ENCODE measurements at regions of chr5 and their contacts with region 1.

Region 1: DNA sequence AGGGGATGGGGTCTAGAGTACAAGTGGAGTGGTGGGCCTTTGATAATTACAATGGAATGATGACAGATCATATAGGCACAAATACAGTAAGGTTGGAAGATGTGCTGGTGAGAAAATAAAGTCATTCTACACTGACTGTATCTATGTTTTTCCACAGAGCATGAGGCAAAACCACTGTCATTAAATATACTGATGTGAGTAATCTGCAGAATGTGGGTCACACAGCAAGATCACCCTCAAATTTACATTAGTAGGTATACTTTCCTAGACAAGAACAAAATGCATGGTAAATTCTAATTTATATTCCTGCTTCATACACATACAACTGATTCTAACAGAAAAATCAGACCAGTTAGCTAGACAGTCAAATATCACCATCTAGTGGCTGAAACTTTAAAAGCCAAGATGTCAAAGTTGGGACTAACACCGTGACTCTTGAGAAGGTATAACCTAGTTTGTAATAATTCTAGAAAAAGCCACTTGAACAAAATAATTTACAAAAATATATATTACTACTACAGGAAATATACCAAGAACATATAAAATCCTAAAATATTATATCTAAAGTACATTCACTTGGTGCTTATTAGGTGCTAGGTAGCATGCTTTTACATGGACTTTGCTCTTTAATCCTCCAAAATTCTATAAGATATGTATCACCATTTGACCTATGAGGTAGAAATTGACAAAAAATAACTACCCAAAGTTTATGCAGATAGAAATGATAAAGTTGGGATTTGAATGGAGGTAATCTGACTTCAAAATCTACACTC is 19.5 kb downstream of the TTC33 start:
- DNase-seq: no peak
- ATAC-seq: peak; percentile 57 to 75

Region 2: GRCh38 chr5:39578887-39579497 is 1157.3 kb before region 1 on chr5:
- intact Hi-C with region 1: loop called in 1 of 2 experiments (anchors 5 kb)
- DNase-seq: no peak
- ATAC-seq: no peak

Region 3: GRCh38 chr5:39948867-39949468 is 787.3 kb before region 1 on chr5:
- intact Hi-C with region 1: loop called in 1 of 2 experiments (anchors 5 kb)
- DNase-seq: peak; percentile 28
- ATAC-seq: peak; percentile 65 to 77

Region 4: DNA sequence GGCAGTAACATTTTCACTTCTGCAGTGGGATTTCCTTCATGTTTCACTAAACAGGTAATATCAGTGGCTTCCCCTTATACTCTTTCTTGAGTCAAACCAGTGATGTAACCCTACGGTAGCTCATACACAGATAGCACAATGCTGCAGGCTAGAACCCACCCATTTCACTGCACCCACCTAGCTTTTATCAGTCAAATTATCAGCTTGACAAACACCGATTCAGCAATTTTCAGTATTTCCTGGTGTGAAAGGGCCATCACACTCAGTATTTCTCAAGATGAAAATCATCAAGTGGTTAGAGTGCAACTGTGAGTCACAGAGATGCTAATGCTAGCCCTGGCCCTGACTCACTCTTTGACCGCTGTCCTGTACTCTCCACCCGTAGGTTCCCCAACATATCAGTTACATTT is 298.8 kb before region 1 on chr5:
- intact Hi-C with region 1: no loop called
- DNase-seq: no peak
- ATAC-seq: peak in 1 of 2 donors; percentile 47

Region 5: DNA sequence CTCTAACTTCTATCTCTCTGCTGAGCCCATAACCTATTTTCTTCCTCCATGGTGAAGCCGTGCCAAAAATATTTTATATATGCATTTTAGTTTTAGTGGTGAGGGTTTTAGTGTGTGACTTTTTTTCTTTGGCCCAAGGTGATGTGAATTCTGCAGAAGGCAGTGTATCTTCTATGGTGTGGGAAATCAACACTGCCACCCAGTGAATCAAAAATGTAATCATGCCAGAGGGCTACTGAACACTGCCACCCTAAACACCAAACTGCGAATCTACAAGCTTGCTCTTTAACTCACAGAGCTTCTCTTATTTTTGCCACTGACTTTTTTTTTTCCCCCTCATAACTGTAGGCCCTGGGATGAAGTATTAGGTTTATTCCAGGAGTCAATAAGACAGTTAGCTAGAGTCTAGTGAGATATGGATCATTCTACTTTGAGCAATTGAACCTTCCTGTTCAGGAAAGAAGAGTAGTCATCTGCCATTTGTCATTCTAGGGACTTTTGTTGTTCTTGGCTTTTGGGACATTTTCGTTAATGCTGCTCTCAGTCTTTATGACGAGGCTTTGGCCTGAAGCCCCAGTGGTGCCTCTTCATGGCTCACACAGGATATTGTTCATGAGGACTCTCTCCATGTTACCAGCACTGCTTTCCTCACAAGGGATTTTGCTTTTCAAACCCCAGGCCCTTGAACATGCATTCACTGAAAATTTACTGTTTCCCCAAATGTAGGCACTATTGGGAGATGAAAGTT is 226.1 kb after region 1 on chr5:
- intact Hi-C with region 1: no loop called
- DNase-seq: no peak
- ATAC-seq: no peak